HEK293 (cell line): ENCODE measurements at regions of chr17 and their contacts with region 1.

Region 1: GRCh38 chr17:63406689-63407330 is 39.3 kb downstream of the CYB561 start:
- H3K4me3 ChIP-seq: no peak overlapping the region
- H3K27ac ChIP-seq: no peak overlapping the region
- H3K4me1 ChIP-seq: no peaks in the 10 kb centered on the region
- CTCF ChIP-seq: peak; percentile 70

Region 2: GRCh38 chr17:62671583-62672312 is 735.1 kb before region 1 on chr17:
- CTCF ChIA-PET with region 1: interaction called, 15 read pairs
- POLR2A ChIA-PET with region 1: no interaction called
- H3K4me3 ChIP-seq: no peak overlapping the region
- H3K27ac ChIP-seq: no peak overlapping the region
- H3K4me1 ChIP-seq: no peaks in the 10 kb centered on the region
- CTCF ChIP-seq: no peak

Region 3: DNA sequence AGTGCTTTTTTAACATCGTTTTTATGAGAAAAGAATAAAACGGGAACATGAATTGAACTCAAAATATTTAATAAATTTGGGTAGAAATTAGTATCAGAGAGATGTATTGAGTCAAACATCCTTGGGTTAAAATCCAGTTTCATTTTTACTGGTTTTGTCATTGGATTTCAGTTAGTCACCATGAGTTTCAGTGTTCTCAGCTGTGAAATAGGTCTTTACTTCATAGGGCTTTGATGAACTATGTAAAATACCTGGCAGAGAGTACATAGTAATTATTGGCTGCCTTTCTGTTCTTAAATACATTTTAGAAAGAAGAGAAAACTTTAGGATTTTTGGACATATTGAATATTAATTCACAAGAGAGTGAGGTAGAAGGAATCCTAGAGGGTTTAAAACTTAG is 335.0 kb before region 1 on chr17:
- CTCF ChIA-PET with region 1: interaction called, 12 read pairs
- POLR2A ChIA-PET with region 1: no interaction called
- H3K4me3 ChIP-seq: no peak overlapping the region
- H3K27ac ChIP-seq: no peak overlapping the region
- H3K4me1 ChIP-seq: 0 out of 2 replicates have a peak, but pooled peaks cover 4% of the 10 kb centered on the region
- CTCF ChIP-seq: no peak

Region 4: GRCh38 chr17:63113183-63113582 is 293.6 kb before region 1 on chr17:
- CTCF ChIA-PET with region 1: interaction called, 21 read pairs
- POLR2A ChIA-PET with region 1: no interaction called
- H3K4me3 ChIP-seq: no peak overlapping the region
- H3K27ac ChIP-seq: no peak overlapping the region
- H3K4me1 ChIP-seq: no peaks in the 10 kb centered on the region; the same call in 1 of the 2 replicates
- CTCF ChIP-seq: no peak

Region 5: GRCh38 chr17:63390090-63390489 is 16.7 kb before region 1 on chr17:
- CTCF ChIA-PET with region 1: interaction called, 33 read pairs
- POLR2A ChIA-PET with region 1: no interaction called
- H3K4me3 ChIP-seq: no peak overlapping the region
- H3K27ac ChIP-seq: no peak overlapping the region
- H3K4me1 ChIP-seq: no peaks in the 10 kb centered on the region
- CTCF ChIP-seq: no peak

Region 6: DNA sequence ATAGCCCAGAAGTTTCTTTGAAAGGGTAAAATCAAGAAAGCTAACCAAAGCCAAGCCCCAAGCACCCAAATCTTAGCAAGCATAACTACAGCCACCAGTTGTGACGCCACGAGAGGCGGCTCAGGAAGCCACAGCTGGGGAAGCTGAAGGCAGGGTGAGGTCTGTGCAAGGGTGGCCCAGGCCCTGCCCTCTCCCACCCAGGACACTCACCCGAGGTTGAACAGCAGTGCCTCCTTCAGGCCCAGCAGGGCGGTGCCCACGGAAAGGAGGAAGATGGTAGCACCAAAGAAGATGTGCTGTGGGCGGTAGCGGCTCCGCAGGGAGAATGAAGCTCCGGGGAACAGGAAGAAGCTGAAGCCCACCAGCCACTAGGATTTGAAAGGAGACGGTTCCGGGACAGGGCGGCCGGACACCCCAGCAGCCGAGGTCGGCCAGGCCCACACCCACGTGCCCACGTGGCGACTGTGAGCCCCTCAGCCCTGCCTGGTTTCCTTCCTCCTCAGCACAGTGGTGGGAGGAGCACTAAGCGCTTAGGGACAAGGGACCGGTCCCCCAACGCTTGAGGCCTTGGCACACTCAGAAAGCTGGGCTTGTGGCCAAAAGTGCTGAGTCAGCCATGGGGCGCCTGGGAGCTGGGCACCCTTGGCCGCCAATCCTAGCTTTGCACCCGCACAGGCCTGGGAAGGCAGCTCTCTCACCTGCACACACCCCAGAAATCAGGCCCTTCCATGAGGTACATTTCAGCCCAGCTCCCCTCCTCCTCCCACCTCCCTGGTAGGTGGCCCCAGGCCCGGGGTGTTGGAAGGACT is 28.3 kb after region 1 on chr17:
- CTCF ChIA-PET with region 1: interaction called, 10 read pairs
- POLR2A ChIA-PET with region 1: no interaction called
- H3K4me3 ChIP-seq: no peak overlapping the region
- H3K27ac ChIP-seq: no peak overlapping the region
- H3K4me1 ChIP-seq: no peaks in the 10 kb centered on the region; the same call in 1 of the 2 replicates
- CTCF ChIP-seq: no peak